ENCODE measurements at regions of chr14 and their contacts with region 1.

Region 1: DNA sequence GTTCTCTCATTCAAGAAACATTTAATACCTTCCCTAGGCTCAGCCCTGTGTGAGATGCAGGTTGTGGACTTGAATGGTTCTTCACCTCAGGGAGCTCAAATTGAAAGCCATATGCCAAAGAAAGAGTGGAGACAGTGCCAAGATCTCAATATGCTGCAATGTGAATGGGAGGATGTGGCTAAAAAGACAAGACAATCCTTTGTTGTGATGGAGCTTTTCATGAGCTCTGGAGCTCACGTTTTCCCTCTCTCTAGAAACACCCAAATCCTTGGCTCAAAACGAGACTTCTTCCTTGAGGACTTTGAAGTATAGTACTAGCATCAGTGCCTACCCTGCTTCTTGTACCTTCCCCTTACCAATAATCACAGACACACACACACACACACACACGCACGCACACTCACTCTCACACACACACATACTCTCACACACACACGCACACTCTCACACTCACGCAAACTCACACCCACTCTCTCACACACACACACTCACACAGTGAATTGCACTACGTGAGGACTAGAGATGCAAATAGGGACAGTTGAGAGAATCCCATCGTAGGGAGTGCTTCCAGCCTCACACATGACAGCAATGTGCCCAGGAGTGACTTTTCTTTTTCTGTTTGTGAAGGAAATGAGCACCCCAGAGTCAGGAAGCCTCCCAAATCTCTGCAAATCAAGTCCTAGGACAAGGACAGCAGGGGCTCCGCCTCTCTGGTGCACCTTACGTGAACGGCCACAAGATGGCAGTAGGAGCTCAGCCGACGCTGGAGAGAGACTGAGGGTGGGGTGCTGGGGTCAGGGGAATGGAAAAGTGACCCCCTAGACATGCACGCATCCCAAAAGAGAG is 231.4 kb downstream of the PCNX1 start:
- DNase-seq: peak; percentile 79
- CTCF ChIP-seq: peak; percentile 93

Region 2: GRCh38 chr14:70735043-70735442 is 403.6 kb before region 1 on chr14:
- in situ Hi-C with region 1: no loop called
- DNase-seq: no peak
- CTCF ChIP-seq: no peak

Region 3: GRCh38 chr14:71753126-71753830 is 614.6 kb after region 1 on chr14:
- in situ Hi-C with region 1: loop called (anchors 10 kb)
- DNase-seq: peak; percentile 86
- CTCF ChIP-seq: peak; percentile 92